GM12878 (cell line): ENCODE measurements at regions of chr12 and their contacts with region 1.

Region 1: GRCh38 chr12:100356644-100357223 is at the start of gene SLC17A8:
- DNase-seq: no peak
- ATAC-seq: peak; percentile 49
- H3K4me3 ChIP-seq: no peak within 1 kb of the TSS
- H3K27ac ChIP-seq: no peak within 1 kb of the TSS
- H3K4me1 ChIP-seq: no peaks in the 10 kb centered on the region
- H3K27me3 ChIP-seq: peaks cover 0 to 3% of the 10 kb centered on the region in 2 experiments; a peak in 1 of 4 replicates
- CTCF ChIP-seq: no peak
- EP300 ChIP-seq: no peak
- POLR2A ChIP-seq: no peak
- RAD21 ChIP-seq: no peak
- polyA plus RNA-seq, gene SLC17A8: not detected

Region 2: GRCh38 chr12:100266835-100267618 is 89.7 kb before region 1 on chr12 and contains the starts of genes DEPDC4 and SCYL2:
- CTCF ChIA-PET with region 1: no interaction called
- POLR2A ChIA-PET with region 1: no interaction called
- RAD21 ChIA-PET with region 1: no interaction called
- SMC1A ChIA-PET with region 1: no interaction called
- in situ Hi-C with region 1: no loop called
- intact Hi-C with region 1: no loop called
- DNase-seq: peak; percentile 84
- ATAC-seq: peak; percentile 89
- H3K4me3 ChIP-seq: peak within 1 kb of the TSS; percentile 98
- H3K27ac ChIP-seq: peak within 1 kb of the TSS; percentile 78
- H3K4me1 ChIP-seq: peaks cover 3% of the 10 kb centered on the region; the same call in 1 of the 2 replicates
- H3K27me3 ChIP-seq: no peaks in the 10 kb centered on the region
- CTCF ChIP-seq: no peak
- EP300 ChIP-seq: no peak
- POLR2A ChIP-seq: peak; percentile 74
- RAD21 ChIP-seq: no peak
- polyA plus RNA-seq, gene DEPDC4: 2.0 to 4.0 TPM
- polyA plus RNA-seq, gene SCYL2: 5.4 to 7.2 TPM

Region 3: GRCh38 chr12:100295764-100296555 is 60.8 kb before region 1 on chr12:
- CTCF ChIA-PET with region 1: no interaction called
- POLR2A ChIA-PET with region 1: no interaction called
- RAD21 ChIA-PET with region 1: no interaction called
- SMC1A ChIA-PET with region 1: no interaction called
- in situ Hi-C with region 1: no loop called
- intact Hi-C with region 1: no loop called
- DNase-seq: no peak
- ATAC-seq: no peak
- H3K4me3 ChIP-seq: no peak overlapping the region
- H3K27ac ChIP-seq: no peak overlapping the region
- H3K4me1 ChIP-seq: no peaks in the 10 kb centered on the region
- H3K27me3 ChIP-seq: no peaks in the 10 kb centered on the region
- CTCF ChIP-seq: no peak
- EP300 ChIP-seq: no peak
- POLR2A ChIP-seq: no peak
- RAD21 ChIP-seq: no peak

Region 4: GRCh38 chr12:100391856-100392255 is 35.1 kb after region 1 on chr12:
- CTCF ChIA-PET with region 1: no interaction called
- POLR2A ChIA-PET with region 1: no interaction called
- RAD21 ChIA-PET with region 1: no interaction called
- SMC1A ChIA-PET with region 1: no interaction called
- in situ Hi-C with region 1: no loop called
- intact Hi-C with region 1: loop called (anchors 1 kb)
- DNase-seq: no peak
- ATAC-seq: no peak
- H3K4me3 ChIP-seq: no peak overlapping the region
- H3K27ac ChIP-seq: no peak overlapping the region
- H3K4me1 ChIP-seq: no peaks in the 10 kb centered on the region
- H3K27me3 ChIP-seq: no peaks in the 10 kb centered on the region
- CTCF ChIP-seq: peak in 1 of 3 experiments; percentile 12; a peak in 1 of 6 replicates
- EP300 ChIP-seq: no peak
- POLR2A ChIP-seq: no peak
- RAD21 ChIP-seq: no peak